Activated B cell treated with CpG ODN at 0.5 μM for 24 hours (primary cell): ENCODE measurements at regions of chr15 and their contacts with region 1.

Region 1: GRCh38 chr15:79028411-79028964 is 62.1 kb downstream of the RASGRF1 start:
- DNase-seq: no peak
- ATAC-seq: peak; percentile 52
- H3K4me3 Mint-ChIP-seq: no peak overlapping the region
- H3K27ac Mint-ChIP-seq: no peak overlapping the region
- H3K4me1 Mint-ChIP-seq: peaks cover 11% of the 10 kb centered on the region
- H3K27me3 Mint-ChIP-seq: no peaks in the 10 kb centered on the region
- CTCF ChIP-seq: no peak

Region 2: DNA sequence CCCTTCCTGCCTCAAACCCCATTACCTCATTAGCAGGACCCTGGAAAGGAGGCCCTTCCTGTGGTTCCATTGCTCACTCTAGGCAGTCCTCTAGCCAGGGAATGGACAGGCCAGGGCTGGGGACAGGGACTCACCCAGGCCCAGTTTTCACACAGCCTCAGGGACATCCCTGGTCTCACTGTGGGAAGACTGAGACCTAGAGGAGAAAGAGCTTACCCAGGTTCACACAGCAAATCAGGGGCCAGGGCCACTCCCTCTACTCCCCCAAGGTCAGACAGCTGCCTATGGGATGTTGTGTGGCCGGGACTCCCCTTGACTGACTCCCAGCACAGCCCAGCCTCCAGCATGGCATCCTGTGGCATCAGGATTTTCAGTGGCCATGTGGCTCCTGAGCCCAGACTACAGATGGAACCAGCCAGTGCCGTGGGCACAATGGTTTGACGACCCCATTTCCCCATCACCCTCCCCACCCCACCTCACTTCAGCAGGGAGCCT is 266.6 kb before region 1 on chr15:
- CTCF ChIA-PET with region 1: no interaction called
- POLR2A ChIA-PET with region 1: interaction called, 4 read pairs
- intact Hi-C with region 1: loop called (anchors 2 kb)
- DNase-seq: no peak
- ATAC-seq: no peak
- H3K4me3 Mint-ChIP-seq: peak overlapping the region; percentile 46
- H3K27ac Mint-ChIP-seq: peak overlapping the region; percentile 77
- H3K4me1 Mint-ChIP-seq: peaks cover 62% of the 10 kb centered on the region
- H3K27me3 Mint-ChIP-seq: no peaks in the 10 kb centered on the region
- CTCF ChIP-seq: no peak

Region 3: GRCh38 chr15:78922527-78923414 is 105.7 kb before region 1 on chr15:
- CTCF ChIA-PET with region 1: interaction called, 17 read pairs
- POLR2A ChIA-PET with region 1: interaction called, 15 read pairs
- intact Hi-C with region 1: no loop called
- DNase-seq: no peak
- ATAC-seq: peak; percentile 49
- H3K4me3 Mint-ChIP-seq: no peak overlapping the region
- H3K27ac Mint-ChIP-seq: peak overlapping the region; percentile 61
- H3K4me1 Mint-ChIP-seq: peaks cover 13% of the 10 kb centered on the region
- H3K27me3 Mint-ChIP-seq: no peaks in the 10 kb centered on the region
- CTCF ChIP-seq: no peak

Region 4: DNA sequence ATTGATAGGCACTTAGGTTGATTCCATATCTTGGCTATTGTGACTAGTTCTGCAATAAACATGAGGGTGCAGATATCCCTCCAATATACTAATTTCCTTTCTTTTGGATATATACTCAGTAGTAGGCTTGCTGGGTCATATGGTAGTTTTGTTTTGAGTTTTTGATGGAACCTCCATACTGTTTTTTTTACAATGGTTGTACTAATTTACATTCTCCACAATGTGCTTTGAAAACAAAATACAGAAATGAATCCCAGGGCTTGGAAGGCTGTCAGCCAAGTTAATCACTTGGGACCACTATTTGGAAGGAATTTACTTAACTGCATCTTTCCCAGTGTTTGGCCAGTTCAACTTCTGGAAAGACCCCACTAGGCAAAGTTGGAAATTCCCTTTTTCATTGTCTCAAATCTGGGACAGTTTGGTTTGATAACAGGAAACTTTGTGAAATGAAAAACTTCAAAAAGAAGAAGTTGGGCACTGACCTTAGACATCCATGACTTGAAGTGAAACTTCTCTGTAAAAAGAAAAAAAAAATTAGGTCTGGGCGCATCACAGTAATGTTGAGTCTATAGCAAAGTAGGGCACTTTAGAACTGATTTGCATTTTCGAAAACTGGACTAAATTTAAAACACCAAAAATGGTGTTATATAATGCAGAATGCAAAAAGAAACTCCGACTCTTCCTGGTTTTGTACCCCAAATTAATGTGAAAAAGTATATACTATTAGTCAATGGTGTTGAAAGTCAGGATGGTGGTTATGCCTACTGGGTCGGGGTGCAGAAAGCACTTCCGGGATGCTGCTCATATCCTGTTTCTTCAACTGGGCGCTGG is 89.6 kb before region 1 on chr15:
- CTCF ChIA-PET with region 1: interaction called, 10 read pairs
- POLR2A ChIA-PET with region 1: interaction called, 14 read pairs
- intact Hi-C with region 1: loop called (anchors 1 kb)
- DNase-seq: no peak
- ATAC-seq: peak; percentile 80
- H3K4me3 Mint-ChIP-seq: peak overlapping the region; percentile 78
- H3K27ac Mint-ChIP-seq: peak overlapping the region; percentile 96
- H3K4me1 Mint-ChIP-seq: peaks cover 80% of the 10 kb centered on the region
- H3K27me3 Mint-ChIP-seq: no peaks in the 10 kb centered on the region
- CTCF ChIP-seq: no peak

Region 5: DNA sequence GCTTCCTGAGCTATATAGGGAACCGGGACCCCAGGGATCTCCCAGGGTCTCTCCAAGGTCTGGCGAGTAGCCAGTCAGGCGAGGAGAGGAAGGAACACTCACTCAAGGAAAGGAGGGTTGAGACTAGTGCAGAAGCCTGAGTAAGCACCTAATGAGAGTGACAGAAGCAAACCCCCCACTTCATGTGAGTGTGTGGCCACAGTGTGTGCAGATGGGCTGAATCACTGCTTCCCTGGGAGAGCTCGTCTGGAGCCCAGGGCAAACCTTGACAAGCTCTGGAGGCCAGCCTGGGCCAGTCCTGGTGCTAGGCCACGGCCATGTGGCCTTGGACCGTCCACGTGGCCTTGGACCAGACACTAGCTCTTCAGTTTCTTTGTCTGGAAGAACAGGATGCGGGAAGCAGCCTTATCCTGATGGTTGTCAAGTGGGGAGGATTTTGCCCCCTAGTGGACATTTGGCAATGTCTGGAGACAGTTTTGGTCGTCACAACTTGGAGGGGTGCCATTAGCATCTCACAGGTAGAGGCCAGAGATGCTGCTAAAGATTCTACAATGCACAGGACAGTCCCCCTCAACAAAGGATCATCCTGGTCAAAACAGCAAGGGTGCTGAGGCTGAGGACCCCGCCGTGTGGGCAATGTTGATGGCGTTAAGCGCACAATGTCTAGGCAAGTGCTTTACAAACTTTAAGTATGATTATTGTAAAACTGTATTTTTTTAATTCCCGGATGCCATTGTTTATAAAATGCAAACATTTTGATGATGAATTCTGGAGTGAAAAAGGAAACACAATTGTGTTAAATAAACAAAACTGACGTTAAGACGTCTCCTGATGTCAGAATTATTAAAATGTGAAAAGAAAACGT is 48.8 kb before region 1 on chr15:
- CTCF ChIA-PET with region 1: interaction called, 10 read pairs
- POLR2A ChIA-PET with region 1: interaction called, 4 read pairs
- intact Hi-C with region 1: loop called (anchors 2 kb)
- DNase-seq: no peak
- ATAC-seq: no peak
- H3K4me3 Mint-ChIP-seq: peak overlapping the region; percentile 77
- H3K27ac Mint-ChIP-seq: peak overlapping the region; percentile 91
- H3K4me1 Mint-ChIP-seq: peaks cover 45% of the 10 kb centered on the region
- H3K27me3 Mint-ChIP-seq: no peaks in the 10 kb centered on the region
- CTCF ChIP-seq: no peak

Region 6: GRCh38 chr15:79184465-79184892 is 156.0 kb after region 1 on chr15:
- CTCF ChIA-PET with region 1: interaction called, 209 read pairs
- POLR2A ChIA-PET with region 1: interaction called, 6 read pairs
- intact Hi-C with region 1: loop called (anchors 1 kb)
- DNase-seq: peak; percentile 51
- ATAC-seq: peak; percentile 56
- H3K4me3 Mint-ChIP-seq: no peak overlapping the region
- H3K27ac Mint-ChIP-seq: no peak overlapping the region
- H3K4me1 Mint-ChIP-seq: no peaks in the 10 kb centered on the region
- H3K27me3 Mint-ChIP-seq: peaks cover 9% of the 10 kb centered on the region
- CTCF ChIP-seq: peak; percentile 90

Region 7: GRCh38 chr15:79209690-79210089 is 181.2 kb after region 1 on chr15:
- CTCF ChIA-PET with region 1: interaction called, 10 read pairs
- POLR2A ChIA-PET with region 1: no interaction called
- intact Hi-C with region 1: no loop called
- DNase-seq: no peak
- ATAC-seq: no peak
- H3K4me3 Mint-ChIP-seq: no peak overlapping the region
- H3K27ac Mint-ChIP-seq: no peak overlapping the region
- H3K4me1 Mint-ChIP-seq: no peaks in the 10 kb centered on the region
- H3K27me3 Mint-ChIP-seq: peaks cover 58% of the 10 kb centered on the region
- CTCF ChIP-seq: no peak